A673 (cell line): ENCODE measurements at regions of chr1 and their contacts with region 1.

Region 1: DNA sequence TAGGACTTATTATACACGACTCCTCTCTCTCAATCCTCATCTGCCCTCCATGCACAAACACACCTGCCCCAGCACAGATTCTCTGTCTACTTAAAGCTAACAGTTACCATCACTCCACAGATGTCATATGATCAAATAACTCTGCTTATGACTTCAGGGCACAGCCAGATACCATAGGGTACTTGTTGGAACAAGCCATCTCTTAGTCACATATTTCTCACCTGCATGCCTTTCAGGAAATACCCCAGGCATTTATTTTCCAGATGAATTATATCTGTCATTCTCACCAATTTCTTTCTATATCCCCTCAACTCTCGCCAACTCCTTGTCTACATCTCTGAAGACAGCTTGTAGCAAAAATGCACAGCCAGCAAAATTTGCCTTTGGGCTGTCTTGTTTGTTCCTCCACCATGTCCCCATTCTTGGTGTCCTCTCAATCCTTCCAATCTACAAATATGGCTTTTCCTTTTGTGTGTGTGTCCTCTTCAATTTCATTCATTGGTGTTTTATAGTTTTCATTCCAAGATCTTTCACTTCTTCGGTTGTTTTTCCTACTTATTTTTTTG is 353.9 kb upstream of the CAMK1G start:
- DNase-seq: no peak
- H3K4me3 ChIP-seq: no peak overlapping the region
- H3K27ac ChIP-seq: no peak overlapping the region
- H3K4me1 ChIP-seq: no peaks in the 10 kb centered on the region
- H3K27me3 ChIP-seq: peaks cover 13% of the 10 kb centered on the region
- CTCF ChIP-seq: no peak

Region 2: GRCh38 chr1:209276321-209276720 is 46.7 kb after region 1 on chr1:
- CTCF ChIA-PET with region 1: no interaction called
- POLR2A ChIA-PET with region 1: no interaction called
- intact Hi-C with region 1: loop called (anchors 5 kb)
- DNase-seq: no peak
- H3K4me3 ChIP-seq: no peak overlapping the region
- H3K27ac ChIP-seq: no peak overlapping the region
- H3K4me1 ChIP-seq: no peaks in the 10 kb centered on the region
- H3K27me3 ChIP-seq: peaks cover 6% of the 10 kb centered on the region
- CTCF ChIP-seq: no peak